ENCODE measurements at regions of chr9 and their contacts with region 1.

Region 1: GRCh38 chr9:124708633-124709291 is 62.3 kb downstream of the NR6A1 start:
- DNase-seq: peak in 1 of 2 experiments; percentile 41
- ATAC-seq: peak in 1 of 2 experiments; percentile 66; a peak in 3 of 6 replicates
- H3K4me3 ChIP-seq: no peak overlapping the region
- H3K27ac ChIP-seq: peak overlapping the region in 1 of 2 experiments; percentile 47; a peak in 2 of 6 replicates
- H3K4me1 ChIP-seq: peaks cover 21% of the 10 kb centered on the region
- CTCF ChIP-seq: no peak
- EP300 ChIP-seq: no peak
- POLR2A ChIP-seq: no peak
- RAD21 ChIP-seq: no peak

Region 2: GRCh38 chr9:124551472-124552272 is 157.1 kb before region 1 on chr9:
- CTCF ChIA-PET with region 1: interaction called, 59 read pairs
- POLR2A ChIA-PET with region 1: no interaction called
- DNase-seq: peak; percentile 66 to 72
- ATAC-seq: peak; percentile 96
- H3K4me3 ChIP-seq: no peak overlapping the region
- H3K27ac ChIP-seq: 0 out of 6 replicates have a peak overlapping the region, but pooled peaks of 1 of the 2 experiments have one; percentile 1
- H3K4me1 ChIP-seq: peaks cover 10% of the 10 kb centered on the region; the same call in 2 of the 3 replicates
- CTCF ChIP-seq: peak; percentile 77
- EP300 ChIP-seq: no peak
- POLR2A ChIP-seq: no peak
- RAD21 ChIP-seq: peak; percentile 73 to 82

Region 3: GRCh38 chr9:124684169-124684568 is 24.6 kb before region 1 on chr9:
- CTCF ChIA-PET with region 1: interaction called, 22 read pairs
- POLR2A ChIA-PET with region 1: no interaction called
- DNase-seq: no peak
- ATAC-seq: no peak
- H3K4me3 ChIP-seq: no peak overlapping the region
- H3K27ac ChIP-seq: no peak overlapping the region
- H3K4me1 ChIP-seq: no peaks in the 10 kb centered on the region
- CTCF ChIP-seq: no peak
- EP300 ChIP-seq: no peak
- POLR2A ChIP-seq: no peak
- RAD21 ChIP-seq: no peak

Region 4: GRCh38 chr9:124735121-124735520 is 26.4 kb after region 1 on chr9:
- CTCF ChIA-PET with region 1: interaction called, 17 read pairs
- POLR2A ChIA-PET with region 1: no interaction called
- DNase-seq: no peak
- ATAC-seq: peak; percentile 24 to 69; a peak in 3 of 6 replicates
- H3K4me3 ChIP-seq: no peak overlapping the region
- H3K27ac ChIP-seq: peak overlapping the region in 1 of 2 experiments; percentile 50; a peak in 1 of 6 replicates
- H3K4me1 ChIP-seq: peaks cover 20% of the 10 kb centered on the region
- CTCF ChIP-seq: no peak
- EP300 ChIP-seq: no peak
- POLR2A ChIP-seq: no peak
- RAD21 ChIP-seq: no peak

Region 5: DNA sequence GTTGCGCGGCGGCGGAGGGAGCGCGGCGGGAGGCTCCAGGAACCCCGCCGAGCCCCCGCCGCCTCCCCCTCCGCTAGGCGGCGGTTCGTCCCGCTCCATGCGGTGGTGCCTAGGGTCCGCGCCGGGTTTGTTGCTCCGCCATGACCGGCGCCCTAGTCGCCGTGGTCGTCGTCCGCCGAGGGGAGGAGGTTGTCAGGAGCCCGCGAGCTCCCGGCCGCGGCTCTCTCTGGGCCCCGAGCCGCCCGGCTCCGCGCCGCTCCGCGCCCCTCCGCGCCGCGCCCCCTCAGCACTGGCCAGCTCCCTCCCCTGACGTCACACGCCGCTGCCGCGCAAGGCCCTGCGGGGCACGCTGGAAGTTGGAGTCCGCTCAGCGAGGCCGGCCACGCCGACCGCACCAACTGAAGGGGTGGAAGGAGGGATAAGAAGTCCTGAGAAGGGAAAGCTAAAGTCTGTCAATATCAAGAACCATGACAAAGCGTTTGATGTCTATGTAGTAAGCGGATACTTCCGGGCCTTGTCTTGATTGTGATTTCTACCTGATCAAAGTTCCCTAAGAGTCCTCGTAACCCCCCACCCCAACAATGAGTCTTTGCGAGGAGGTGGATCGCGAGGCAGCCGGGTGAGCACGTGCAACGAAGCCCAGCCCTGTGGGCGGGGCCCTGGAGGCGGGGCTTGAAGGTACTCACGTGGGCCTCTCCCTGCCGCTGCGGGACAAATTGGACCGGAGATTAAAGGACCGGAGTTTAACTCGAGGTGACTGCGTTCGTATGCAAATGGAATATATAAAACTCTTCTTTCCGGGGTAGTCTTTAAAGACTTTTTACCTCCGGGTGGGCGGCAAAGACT is 62.5 kb after region 1 on chr9 and contains the start of gene NR6A1:
- CTCF ChIA-PET with region 1: interaction called, 166 read pairs
- POLR2A ChIA-PET with region 1: no interaction called
- DNase-seq: peak; percentile 97 to 98
- ATAC-seq: peak; percentile 81 to 88
- H3K4me3 ChIP-seq: peak within 1 kb of the TSS; percentile 94
- H3K27ac ChIP-seq: peak within 1 kb of the TSS; percentile 82 to 95
- H3K4me1 ChIP-seq: peaks cover 30% of the 10 kb centered on the region; the same call in 2 of the 3 replicates
- CTCF ChIP-seq: peak; percentile 38
- EP300 ChIP-seq: no peak
- POLR2A ChIP-seq: peak; percentile 24; the same call in 1 of the 2 replicates
- RAD21 ChIP-seq: no peak
- polyA plus RNA-seq, gene NR6A1: 3.3 and 4.1 TPM in 2 replicates